ENCODE measurements at regions of chrX and their contacts with region 1.

Region 1: GRCh38 chrX:71181910-71182799 is 37.5 kb downstream of the NLGN3 start:
- DNase-seq: peak; percentile 94
- H3K4me3 ChIP-seq: peak overlapping the region; percentile 27 to 51 (median 49)
- H3K27ac ChIP-seq: peak overlapping the region; percentile 84 to 90 (median 86)
- H3K4me1 ChIP-seq: peaks cover 0 to 6% (median 5%) of the 10 kb centered on the region in 4 donors
- H3K27me3 ChIP-seq: no peaks in the 10 kb centered on the region
- CTCF ChIP-seq: no peak
- EP300 ChIP-seq: no peak
- POLR2A ChIP-seq: peak; percentile 44 to 65

Region 2: GRCh38 chrX:70454441-70455365 is 727.5 kb before region 1 on chrX:
- intact Hi-C with region 1: loop called (anchors 10 kb)
- DNase-seq: peak; percentile 81
- H3K4me3 ChIP-seq: peak overlapping the region; percentile 43 to 59 (median 53)
- H3K27ac ChIP-seq: peak overlapping the region; percentile 79 to 89 (median 86)
- H3K4me1 ChIP-seq: peaks cover 0 to 19% (median 0%) of the 10 kb centered on the region in 4 donors
- H3K27me3 ChIP-seq: no peaks in the 10 kb centered on the region
- CTCF ChIP-seq: peak; percentile 54 to 83 (median 71)
- EP300 ChIP-seq: no peak
- POLR2A ChIP-seq: no peak

Region 3: DNA sequence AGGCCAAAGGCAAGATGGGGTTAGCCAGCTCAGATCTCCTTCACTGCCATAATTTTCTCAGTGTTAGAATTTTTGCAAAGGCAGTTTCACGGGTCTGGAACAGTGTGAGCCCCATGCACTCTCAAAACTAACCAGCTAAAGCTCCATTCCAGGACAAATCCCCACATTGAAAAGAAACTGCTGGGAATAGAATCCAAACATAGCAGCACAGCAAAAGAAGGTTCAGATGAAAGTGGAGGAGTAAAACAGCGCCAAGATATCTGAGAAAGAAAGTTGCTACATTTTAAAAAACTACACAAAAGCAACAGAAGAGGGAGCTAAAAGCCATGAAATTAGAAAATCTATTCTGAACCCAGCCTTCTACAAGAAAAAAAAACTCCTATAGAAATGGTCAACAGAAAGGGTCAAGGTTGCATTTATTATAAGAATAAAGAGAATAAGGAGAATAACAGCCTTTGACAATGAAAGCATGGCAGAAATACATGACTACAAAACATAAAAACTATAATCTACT is 211.6 kb before region 1 on chrX:
- intact Hi-C with region 1: loop called (anchors 5 kb)
- DNase-seq: no peak
- H3K4me3 ChIP-seq: no peak overlapping the region
- H3K27ac ChIP-seq: no peak overlapping the region
- H3K4me1 ChIP-seq: no peaks in the 10 kb centered on the region
- H3K27me3 ChIP-seq: no peaks in the 10 kb centered on the region
- CTCF ChIP-seq: no peak
- EP300 ChIP-seq: no peak
- POLR2A ChIP-seq: no peak

Region 4: DNA sequence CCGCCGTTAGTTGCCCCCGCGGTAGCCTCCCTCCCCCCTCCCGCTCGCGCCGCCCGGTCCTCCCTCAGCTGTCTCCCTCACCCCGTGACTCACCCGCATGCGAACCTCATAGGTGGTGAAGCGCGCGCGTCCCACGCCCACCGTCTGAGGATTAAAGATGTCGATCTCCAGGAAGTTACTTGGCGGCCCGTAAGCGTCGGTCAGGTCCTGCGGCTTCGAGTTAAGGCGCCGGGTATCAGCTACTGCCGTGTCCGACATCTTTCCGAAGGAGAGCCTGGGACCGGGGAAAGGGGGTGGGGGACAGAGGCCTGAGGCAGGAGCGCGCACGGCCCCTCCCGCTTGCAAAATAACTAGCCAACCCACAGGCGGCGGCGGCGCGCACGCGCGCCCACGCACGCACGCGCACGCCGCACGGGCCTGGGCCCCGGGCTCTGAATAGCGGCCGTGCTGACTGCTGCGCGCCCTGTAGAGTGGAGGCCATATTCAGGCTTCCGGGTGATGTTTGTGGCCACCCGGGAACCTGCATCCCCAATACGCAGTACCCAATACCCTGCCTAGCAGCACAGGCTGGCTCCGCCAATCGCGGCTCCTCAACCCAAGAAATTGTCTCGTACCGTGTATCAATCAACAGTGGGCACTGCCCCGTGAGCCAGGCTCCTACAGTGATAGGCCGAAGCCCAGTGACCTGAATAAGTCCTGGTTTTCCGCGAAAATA is 113.9 kb before region 1 on chrX and contains the start of gene SNX12:
- intact Hi-C with region 1: loop called (anchors 5 kb)
- DNase-seq: peak; percentile 96
- H3K4me3 ChIP-seq: peak within 1 kb of the TSS; percentile 55 to 59 (median 59)
- H3K27ac ChIP-seq: peak within 1 kb of the TSS; percentile 83 to 85 (median 84)
- H3K4me1 ChIP-seq: peaks cover 0 to 6% (median 0%) of the 10 kb centered on the region in 4 donors
- H3K27me3 ChIP-seq: no peaks in the 10 kb centered on the region
- CTCF ChIP-seq: peak in 3 of 4 experiments; percentile 13 to 46 (median 18)
- EP300 ChIP-seq: no peak
- POLR2A ChIP-seq: peak; percentile 9 to 48
- total RNA-seq, gene SNX12: 27.6 to 47.4 (median 38.6) TPM

Region 5: DNA sequence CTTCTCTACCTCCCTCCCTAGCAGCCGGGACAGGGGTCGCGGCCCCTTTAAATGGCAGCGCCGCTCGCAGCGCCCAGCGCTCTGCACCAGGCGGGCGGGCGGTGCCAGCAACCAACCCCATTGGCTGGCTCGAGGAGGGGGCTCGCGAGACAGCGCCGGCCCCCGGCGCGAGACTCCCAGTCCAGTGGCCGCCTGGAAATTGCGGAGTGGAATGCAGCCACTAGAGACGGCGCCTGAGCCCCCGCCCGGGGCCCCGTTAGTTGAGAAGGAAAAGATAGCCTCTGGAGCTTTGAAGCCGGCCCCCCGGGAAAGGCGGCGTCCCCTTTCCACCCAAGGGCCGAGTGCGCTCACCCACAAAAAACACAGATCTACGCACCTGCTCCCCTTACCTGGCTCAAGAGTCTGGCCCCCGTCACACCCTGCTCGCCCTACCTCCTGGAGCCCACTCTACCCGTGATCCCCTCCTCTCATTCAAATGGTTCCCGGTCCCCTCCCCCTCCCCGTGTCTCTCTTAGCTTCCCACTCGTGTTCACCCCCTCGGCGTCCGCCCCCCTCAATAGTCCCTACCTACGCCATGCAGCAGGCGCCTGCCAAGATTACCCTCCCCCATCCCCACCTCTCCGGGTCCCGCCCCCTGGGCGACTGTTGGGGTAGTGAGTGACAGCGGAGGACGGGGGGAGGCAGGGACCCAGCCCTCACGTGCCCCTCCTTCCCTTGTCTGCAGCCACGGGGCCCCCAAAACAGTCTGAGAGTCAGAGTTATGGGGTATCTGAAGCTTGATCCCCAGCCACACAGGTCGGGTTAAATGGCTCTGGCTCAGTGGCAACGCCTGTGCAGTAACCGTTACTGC is 72.2 kb after region 1 on chrX and contains the start of gene ZMYM3:
- intact Hi-C with region 1: loop called (anchors 10 kb)
- DNase-seq: peak; percentile 93
- H3K4me3 ChIP-seq: peak within 1 kb of the TSS; percentile 53 to 70 (median 66)
- H3K27ac ChIP-seq: peak within 1 kb of the TSS; percentile 85 to 93 (median 89)
- H3K4me1 ChIP-seq: peaks cover 0 to 16% (median 12%) of the 10 kb centered on the region in 4 donors
- H3K27me3 ChIP-seq: no peaks in the 10 kb centered on the region
- CTCF ChIP-seq: no peak
- EP300 ChIP-seq: no peak
- POLR2A ChIP-seq: peak in 1 of 2 donors; percentile 32
- total RNA-seq, gene ZMYM3: 12.4 to 23.5 (median 14.6) TPM